ENCODE measurements at regions of chr19 and their contacts with region 1.

Region 1: DNA sequence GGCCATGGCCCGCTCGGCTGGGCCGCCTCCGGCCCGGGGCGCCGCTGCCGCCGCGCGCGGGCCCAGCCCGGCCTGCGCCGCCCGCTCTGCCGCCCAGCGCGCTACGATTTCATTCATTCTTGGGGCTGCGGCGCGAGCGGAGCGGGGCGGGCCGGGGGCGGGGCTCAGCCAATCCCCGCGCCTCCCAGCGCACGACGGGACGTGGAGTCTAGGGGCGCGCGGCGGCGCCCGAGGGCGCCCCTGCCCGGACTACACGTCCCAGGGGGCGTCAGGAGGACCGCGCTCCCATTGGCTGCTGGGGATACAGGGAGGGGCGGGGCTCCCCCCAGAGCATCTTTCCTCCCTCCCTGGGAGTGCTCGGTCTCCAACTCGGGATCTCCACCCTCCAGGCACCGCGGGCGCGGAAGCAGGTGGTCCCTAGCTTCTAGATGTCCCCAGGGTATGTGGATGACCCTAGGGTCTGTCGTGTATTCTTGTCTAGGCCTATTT is 5.6 kb upstream of the DPF1 start:
- DNase-seq: peak; percentile 66 to 84 (median 80)
- ATAC-seq: peak; percentile 78 to 96 (median 92)
- H3K4me3 ChIP-seq: peak overlapping the region in 9 of 12 donors; percentile 17 to 44 (median 29)
- H3K27ac ChIP-seq: no peak overlapping the region
- H3K4me1 ChIP-seq: peaks cover 7 to 14% (median 11%) of the 10 kb centered on the region in 12 donors
- H3K27me3 ChIP-seq: peaks cover 15 to 64% (median 32%) of the 10 kb centered on the region in 9 donors
- CTCF ChIP-seq: peak in 2 of 12 donors; percentile 13 to 15
- POLR2A ChIP-seq: no peak

Region 2: DNA sequence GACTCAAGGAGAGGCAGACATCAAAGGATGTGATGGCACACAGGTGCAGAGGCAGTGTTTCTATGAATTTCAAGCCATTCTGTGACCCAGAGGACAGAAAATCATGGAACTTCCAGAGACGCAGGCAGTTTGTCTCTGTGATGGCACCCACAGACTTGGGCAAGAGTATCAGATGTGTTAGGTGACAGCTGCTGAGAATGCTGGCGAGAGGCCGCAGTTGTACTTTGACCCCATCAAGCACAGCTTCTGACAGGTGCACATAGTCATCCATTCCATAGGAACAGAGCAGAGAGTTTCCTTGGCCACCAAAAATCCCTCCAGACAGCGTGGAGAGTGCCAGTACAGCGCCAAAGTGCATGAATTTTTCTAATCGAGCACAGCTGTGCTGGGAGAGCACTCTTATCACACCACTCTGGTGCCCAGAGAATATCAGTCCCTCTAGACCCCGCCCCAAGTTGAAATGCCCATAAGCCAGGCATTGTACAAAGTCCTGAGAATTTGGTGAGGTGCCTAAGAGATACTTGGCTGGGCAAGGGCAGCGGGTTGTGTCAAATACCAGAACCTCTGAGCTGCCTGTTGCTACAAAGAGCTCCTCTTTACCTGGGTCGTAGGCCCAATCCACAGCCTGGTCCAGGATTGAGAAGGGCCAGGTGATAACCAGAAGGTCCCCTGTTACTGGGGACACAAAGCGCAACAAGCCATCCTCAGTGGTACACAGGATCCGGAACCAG is 335.6 kb before region 1 on chr19:
- intact Hi-C with region 1: loop called in 3 of 10 experiments (anchors 5 to 10 kb)
- DNase-seq: no peak
- ATAC-seq: no peak
- H3K4me3 ChIP-seq: no peak overlapping the region
- H3K27ac ChIP-seq: no peak overlapping the region
- H3K4me1 ChIP-seq: peaks cover 0 to 4% (median 0%) of the 10 kb centered on the region in 12 donors
- H3K27me3 ChIP-seq: peaks cover 0 to 20% (median 0%) of the 10 kb centered on the region in 9 donors
- CTCF ChIP-seq: no peak
- POLR2A ChIP-seq: no peak

Region 3: DNA sequence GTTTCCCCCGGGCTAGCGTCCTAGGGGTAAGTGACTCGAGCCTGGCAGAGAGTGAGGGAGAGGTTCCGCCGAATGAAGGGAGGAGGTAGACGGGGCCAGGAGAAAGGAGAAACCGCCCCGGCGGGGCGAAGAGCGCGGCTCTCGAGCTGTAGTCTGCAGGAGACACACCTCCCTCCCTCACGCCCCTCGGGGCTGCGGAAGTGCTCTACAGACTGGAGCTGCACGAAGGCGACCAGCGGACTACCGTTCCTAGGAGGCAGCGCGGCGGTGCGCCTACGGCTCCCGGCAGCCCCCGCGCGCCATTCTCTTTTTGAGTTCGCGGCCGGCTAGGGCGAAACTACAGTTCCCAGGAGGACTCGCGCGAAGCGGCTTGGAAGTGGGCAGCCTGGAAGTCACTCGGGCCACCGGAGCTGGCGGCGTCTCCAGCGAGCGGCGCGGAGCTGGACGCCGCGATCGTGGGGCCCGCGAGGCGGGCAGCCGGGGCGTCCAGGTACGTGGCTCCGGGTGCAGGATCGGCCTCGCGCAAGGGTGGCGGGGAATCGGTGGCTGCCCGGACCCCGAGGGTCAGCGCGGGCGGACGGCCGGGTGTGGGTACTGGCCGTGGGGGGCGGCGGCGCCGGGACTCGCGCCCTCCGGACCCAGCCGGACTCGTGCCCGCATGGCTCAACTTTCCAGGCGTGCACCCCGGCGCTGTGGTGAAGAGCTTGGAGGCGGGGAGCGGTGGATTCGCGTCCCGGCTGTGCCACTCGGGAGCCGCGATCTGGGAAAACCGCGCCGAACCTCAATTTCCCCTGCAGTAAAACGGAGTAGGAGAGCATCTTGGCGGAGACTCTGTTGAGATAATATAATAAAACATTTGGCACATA is 322.5 kb before region 1 on chr19 and contains the start of gene SIPA1L3:
- intact Hi-C with region 1: loop called in 6 of 10 experiments (anchors 5 to 10 kb)
- DNase-seq: peak; percentile 94 to 97 (median 95)
- ATAC-seq: peak; percentile 97 to 99 (median 99)
- H3K4me3 ChIP-seq: peak within 1 kb of the TSS; percentile 76 to 98 (median 88)
- H3K27ac ChIP-seq: peak within 1 kb of the TSS in 11 of 12 donors; percentile 47 to 81 (median 76)
- H3K4me1 ChIP-seq: peaks cover 0 to 19% (median 12%) of the 10 kb centered on the region in 12 donors
- H3K27me3 ChIP-seq: no peaks in the 10 kb centered on the region
- CTCF ChIP-seq: peak in 2 of 12 donors; percentile 18 to 25
- POLR2A ChIP-seq: peak in 1 of 2 donors; percentile 86
- total RNA-seq, gene SIPA1L3: 6.3 to 22.9 (median 9.4) TPM

Region 4: DNA sequence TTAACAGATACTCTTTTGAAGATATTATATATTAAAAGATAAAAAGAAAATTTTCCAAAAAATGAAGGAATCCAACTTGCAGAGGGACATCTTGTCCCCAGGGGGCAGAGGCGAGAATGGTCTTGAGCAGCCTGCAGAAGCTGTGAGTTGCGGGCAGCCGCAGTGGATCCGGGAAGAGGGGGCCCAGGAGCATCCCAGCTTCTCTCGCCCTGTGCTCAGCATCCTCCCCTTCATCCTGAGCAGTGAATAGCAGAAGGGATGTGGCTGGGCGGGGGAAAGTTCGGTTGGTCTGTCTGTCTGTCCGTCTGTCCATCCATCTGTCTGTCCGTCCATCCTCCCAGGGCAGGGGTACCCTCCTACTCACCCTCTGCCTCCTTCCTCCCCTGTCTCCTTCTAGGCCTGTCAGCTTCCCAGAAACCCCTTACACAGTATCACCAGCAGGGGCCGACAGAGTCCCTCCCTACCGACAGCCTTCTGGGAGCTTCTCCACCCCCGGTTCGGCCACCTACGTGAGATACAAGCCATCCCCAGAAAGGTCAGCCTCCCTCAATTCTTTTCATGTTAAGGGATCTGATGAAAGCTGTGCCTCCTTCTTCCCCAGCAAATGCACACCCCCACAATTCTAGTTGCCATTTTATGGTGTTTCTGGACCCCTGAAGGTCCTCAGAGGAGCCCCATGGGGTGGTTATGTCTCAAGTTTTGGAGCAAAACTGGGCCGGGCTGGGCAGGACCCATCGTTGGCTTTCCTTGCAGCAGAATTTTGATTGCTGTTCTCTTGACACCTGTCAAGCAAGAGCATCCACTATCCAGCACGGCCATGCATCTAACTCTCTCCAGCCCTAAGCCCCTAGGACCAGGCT is 87.2 kb before region 1 on chr19:
- intact Hi-C with region 1: loop called in 8 of 10 experiments (anchors 5 to 10 kb)
- DNase-seq: peak; percentile 49 to 77 (median 63)
- ATAC-seq: peak; percentile 70 to 86 (median 74)
- H3K4me3 ChIP-seq: no peak overlapping the region
- H3K27ac ChIP-seq: no peak overlapping the region
- H3K4me1 ChIP-seq: no peaks in the 10 kb centered on the region
- H3K27me3 ChIP-seq: no peaks in the 10 kb centered on the region
- CTCF ChIP-seq: peak; percentile 48 to 75 (median 68)
- POLR2A ChIP-seq: no peak

Region 5: DNA sequence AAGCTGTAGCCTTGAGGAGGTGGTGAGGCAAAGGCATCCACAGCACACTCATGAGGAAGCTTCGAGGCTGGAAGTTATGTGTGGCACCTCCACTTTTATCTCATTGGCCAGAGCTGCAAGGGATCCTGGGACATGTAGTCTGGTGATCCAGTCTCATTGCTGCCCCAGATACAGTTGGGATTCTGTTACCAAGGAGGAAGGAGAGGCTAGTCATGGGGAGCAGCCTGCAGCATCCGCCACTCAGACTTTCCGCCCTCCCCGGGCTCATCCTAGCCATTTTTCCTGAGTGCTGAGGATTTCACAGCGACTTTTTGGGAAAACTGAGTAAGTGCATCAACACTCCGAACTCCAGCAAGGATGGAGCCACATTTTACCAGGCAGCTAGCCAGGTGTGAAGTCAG is 80.0 kb before region 1 on chr19:
- intact Hi-C with region 1: loop called in 8 of 10 experiments (anchors 5 to 10 kb)
- DNase-seq: no peak
- ATAC-seq: no peak
- H3K4me3 ChIP-seq: no peak overlapping the region
- H3K27ac ChIP-seq: no peak overlapping the region
- H3K4me1 ChIP-seq: peaks cover 0 to 5% (median 0%) of the 10 kb centered on the region in 12 donors
- H3K27me3 ChIP-seq: no peaks in the 10 kb centered on the region
- CTCF ChIP-seq: no peak
- POLR2A ChIP-seq: no peak

Region 6: DNA sequence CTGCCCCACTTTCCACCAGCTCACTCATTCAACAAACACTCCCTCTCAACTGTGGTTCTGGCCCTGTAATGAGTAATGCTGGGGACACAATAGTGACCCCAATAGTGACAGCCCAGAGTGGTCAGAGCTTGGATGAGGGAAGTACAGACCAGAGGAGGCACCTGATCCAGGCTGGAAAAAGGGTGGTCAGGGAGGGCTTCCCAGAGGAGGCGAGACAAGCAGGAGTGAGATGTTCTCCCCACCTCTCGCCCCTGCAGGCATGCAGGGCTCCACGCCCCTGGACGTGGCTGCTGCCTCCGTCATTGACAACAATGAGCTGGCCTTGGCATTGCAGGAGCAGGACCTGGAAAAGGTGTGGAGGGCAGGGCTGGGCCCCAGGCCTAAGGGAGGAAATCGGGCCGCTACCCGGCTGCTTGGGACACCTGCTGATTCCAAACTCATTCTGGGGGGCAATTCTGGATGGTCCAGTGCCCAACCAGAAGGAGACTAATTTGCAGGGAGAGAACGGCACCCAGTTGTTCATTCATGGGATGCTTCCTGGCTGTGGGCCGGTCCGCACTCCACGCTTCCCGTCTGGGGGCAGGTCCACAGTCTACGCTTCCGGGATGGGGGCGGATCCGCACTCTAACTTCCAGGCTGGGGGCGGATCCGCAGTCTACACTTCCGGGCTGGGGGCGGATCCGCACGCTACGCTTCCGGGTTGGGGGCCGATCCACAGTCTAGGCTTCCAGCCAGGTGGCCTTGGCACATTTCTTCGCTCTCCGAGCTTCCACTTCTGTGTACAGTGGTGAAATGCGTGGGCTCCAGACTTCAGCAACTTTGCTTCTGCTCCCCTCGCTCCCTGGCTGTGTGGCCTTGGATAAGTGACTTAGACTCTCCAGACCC is 267.2 kb after region 1 on chr19:
- intact Hi-C with region 1: loop called in 1 of 10 experiments (anchors 10 kb)
- DNase-seq: peak in 3 of 5 donors; percentile 20 to 47 (median 35)
- ATAC-seq: peak; percentile 33 to 78 (median 48)
- H3K4me3 ChIP-seq: peak overlapping the region in 3 of 12 donors; percentile 3 to 25 (median 22)
- H3K27ac ChIP-seq: no peak overlapping the region
- H3K4me1 ChIP-seq: no peaks in the 10 kb centered on the region
- H3K27me3 ChIP-seq: peaks cover 0 to 6% (median 0%) of the 10 kb centered on the region in 9 donors
- CTCF ChIP-seq: no peak
- POLR2A ChIP-seq: no peak